GM12878 (cell line): ENCODE measurements at regions of chr1 and their contacts with region 1.

Region 1: GRCh38 chr1:206734499-206735142 is 36.0 kb upstream of the IL19 start:
- DNase-seq: no peak
- ATAC-seq: peak; percentile 45
- H3K4me3 ChIP-seq: no peak overlapping the region
- H3K27ac ChIP-seq: no peak overlapping the region; the same call in 1 of the 2 replicates
- H3K4me1 ChIP-seq: peaks cover 28% of the 10 kb centered on the region
- H3K27me3 ChIP-seq: no peaks in the 10 kb centered on the region
- CTCF ChIP-seq: peak; percentile 84 to 98 (median 96)
- EP300 ChIP-seq: no peak
- POLR2A ChIP-seq: no peak; the same call in 1 of the 2 replicates
- RAD21 ChIP-seq: peak; percentile 98

Region 2: DNA sequence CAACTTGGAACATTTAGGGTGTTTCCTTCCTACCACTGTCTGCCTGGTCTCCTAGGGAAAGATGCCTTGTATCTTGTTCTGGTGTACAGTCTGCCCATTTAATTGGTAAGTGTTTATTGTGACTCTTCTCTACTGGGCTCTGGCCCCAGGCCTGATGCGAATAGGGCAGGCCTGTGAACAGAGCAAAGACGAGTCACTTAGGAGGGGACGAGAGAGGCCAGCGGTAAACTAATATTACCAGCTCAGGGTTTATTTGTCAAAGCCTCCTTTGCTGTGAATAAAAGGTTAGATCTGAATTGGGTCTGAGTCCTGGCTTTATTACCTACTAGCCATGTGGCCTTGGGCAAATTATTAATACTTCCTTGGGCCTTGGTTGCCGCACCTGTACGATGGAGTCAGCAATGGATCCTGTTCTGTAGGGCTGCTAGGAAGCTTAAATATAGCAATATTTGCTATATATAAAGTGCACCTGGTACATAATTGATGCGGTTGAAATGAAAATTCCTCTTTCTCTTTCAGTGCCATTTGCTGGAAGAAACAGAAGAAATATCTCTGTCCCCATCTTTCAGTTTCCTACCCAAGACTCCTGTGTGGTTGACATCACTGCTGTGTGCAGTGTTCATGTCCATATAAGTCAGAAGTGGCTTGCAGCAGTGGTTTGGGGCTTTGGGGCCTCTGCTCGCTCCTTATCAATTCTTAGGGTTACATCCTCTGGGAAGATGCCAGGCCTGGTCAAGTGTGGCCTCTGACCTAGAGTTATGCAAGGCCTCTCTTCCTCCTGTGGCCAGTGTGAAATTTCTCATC is 17.5 kb before region 1 on chr1:
- CTCF ChIA-PET with region 1: interaction called, 72 read pairs
- POLR2A ChIA-PET with region 1: interaction called, 6 read pairs
- RAD21 ChIA-PET with region 1: interaction called, 11 read pairs
- SMC1A ChIA-PET with region 1: interaction called, 11 read pairs
- in situ Hi-C with region 1: no loop called
- intact Hi-C with region 1: no loop called
- DNase-seq: peak; percentile 88
- ATAC-seq: peak; percentile 78
- H3K4me3 ChIP-seq: 0 out of 2 replicates have a peak overlapping the region, but pooled peaks have one; percentile 19
- H3K27ac ChIP-seq: peak overlapping the region; percentile 73
- H3K4me1 ChIP-seq: peaks cover 74% of the 10 kb centered on the region
- H3K27me3 ChIP-seq: no peaks in the 10 kb centered on the region
- CTCF ChIP-seq: no peak
- EP300 ChIP-seq: peak in 1 of 2 experiments; percentile 34; a peak in 1 of 4 replicates
- POLR2A ChIP-seq: no peak
- RAD21 ChIP-seq: no peak

Region 3: DNA sequence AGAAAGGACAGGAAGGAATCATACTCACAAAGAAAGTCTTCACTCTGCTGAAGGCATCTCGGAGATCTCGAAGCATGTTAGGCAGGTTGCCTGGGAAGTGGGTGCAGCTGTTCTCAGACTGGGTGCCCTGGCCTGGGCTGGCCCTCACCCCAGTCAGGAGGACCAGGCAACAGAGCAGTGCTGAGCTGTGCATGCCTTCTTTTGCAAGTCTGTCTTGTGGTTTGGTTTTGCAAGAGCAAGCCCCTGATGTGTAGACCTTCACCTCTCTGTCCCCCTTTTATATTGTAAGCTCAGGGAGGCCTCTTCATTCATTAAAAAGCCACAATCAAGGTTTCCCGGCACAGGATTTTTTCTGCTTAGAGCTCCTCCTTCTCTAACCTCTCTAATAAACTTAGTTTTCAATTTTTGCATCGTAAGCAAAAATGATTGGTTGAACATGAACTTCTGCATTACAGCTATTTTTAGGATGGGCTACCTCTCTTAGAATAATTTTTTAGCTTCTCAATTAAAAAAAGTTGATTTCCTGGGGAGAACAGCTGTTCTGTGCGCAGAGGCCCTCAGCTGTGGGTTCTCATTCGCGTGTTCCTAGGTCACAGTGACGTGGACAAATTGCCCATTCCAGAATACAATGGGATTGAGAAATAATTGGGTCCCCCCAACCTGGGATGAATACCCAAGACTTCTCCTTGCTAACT is 37.8 kb after region 1 on chr1 and contains the start of gene IL10:
- CTCF ChIA-PET with region 1: interaction called, 110 read pairs
- POLR2A ChIA-PET with region 1: interaction called, 52 read pairs
- RAD21 ChIA-PET with region 1: interaction called, 227 read pairs
- SMC1A ChIA-PET with region 1: interaction called, 264 read pairs
- in situ Hi-C with region 1: loop called (anchors 5 kb)
- intact Hi-C with region 1: no loop called
- DNase-seq: no peak
- ATAC-seq: no peak
- H3K4me3 ChIP-seq: peak within 1 kb of the TSS; percentile 74
- H3K27ac ChIP-seq: peak within 1 kb of the TSS; percentile 86
- H3K4me1 ChIP-seq: peaks cover 70% of the 10 kb centered on the region
- H3K27me3 ChIP-seq: no peaks in the 10 kb centered on the region
- CTCF ChIP-seq: no peak
- EP300 ChIP-seq: no peak
- POLR2A ChIP-seq: peak; percentile 46; the same call in 1 of the 2 replicates
- RAD21 ChIP-seq: no peak
- polyA plus RNA-seq, gene IL10: 1.2 to 1.6 TPM

Region 4: GRCh38 chr1:206797534-206798383 is 63.1 kb after region 1 on chr1:
- CTCF ChIA-PET with region 1: interaction called, 805 read pairs
- POLR2A ChIA-PET with region 1: interaction called, 24 read pairs
- RAD21 ChIA-PET with region 1: interaction called, 297 read pairs
- SMC1A ChIA-PET with region 1: interaction called, 417 read pairs
- in situ Hi-C with region 1: loop called (anchors 5 kb)
- intact Hi-C with region 1: no loop called
- DNase-seq: no peak
- ATAC-seq: peak; percentile 31; the same call in 2 of the 3 replicates
- H3K4me3 ChIP-seq: no peak overlapping the region
- H3K27ac ChIP-seq: no peak overlapping the region
- H3K4me1 ChIP-seq: peaks cover 28% of the 10 kb centered on the region
- H3K27me3 ChIP-seq: no peaks in the 10 kb centered on the region
- CTCF ChIP-seq: peak; percentile 44 to 78 (median 73)
- EP300 ChIP-seq: no peak
- POLR2A ChIP-seq: no peak
- RAD21 ChIP-seq: peak; percentile 41

Region 5: DNA sequence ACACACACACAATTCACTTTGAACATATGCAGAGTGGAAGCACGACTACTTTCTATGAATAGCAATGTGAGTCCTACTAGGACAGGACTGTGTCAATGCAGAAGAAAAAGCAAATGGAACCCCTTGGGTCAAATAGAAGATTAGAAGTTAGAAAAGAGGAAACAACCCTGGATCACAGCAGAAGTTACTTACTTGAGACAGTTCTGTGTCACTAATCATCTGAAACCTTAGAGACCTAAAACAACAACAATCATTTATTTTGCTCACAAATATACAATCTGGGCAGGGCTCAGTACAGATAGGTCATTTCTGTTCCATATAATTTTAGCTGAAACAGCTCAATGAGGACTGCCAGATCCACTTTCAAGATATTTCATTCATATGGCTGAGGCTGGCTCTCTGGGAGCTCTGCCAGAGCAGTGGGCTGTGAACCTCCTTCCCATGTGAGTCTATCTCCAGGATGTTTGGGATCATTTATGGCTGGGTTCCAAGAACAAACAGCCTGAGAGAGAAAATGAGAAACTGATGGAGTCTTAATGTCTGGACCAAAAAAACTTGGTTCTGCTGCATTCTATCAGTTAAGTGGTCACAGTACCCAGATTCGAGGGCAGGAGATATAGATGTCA is 80.2 kb after region 1 on chr1:
- CTCF ChIA-PET with region 1: interaction called, 805 read pairs
- POLR2A ChIA-PET with region 1: interaction called, 7 read pairs
- RAD21 ChIA-PET with region 1: interaction called, 297 read pairs
- SMC1A ChIA-PET with region 1: interaction called, 417 read pairs
- in situ Hi-C with region 1: no loop called
- intact Hi-C with region 1: no loop called
- DNase-seq: no peak
- ATAC-seq: peak; percentile 42
- H3K4me3 ChIP-seq: no peak overlapping the region
- H3K27ac ChIP-seq: no peak overlapping the region; the same call in 1 of the 2 replicates
- H3K4me1 ChIP-seq: peaks cover 27% of the 10 kb centered on the region
- H3K27me3 ChIP-seq: no peaks in the 10 kb centered on the region
- CTCF ChIP-seq: no peak
- EP300 ChIP-seq: no peak
- POLR2A ChIP-seq: no peak
- RAD21 ChIP-seq: no peak

Region 6: GRCh38 chr1:206935491-206936067 is 201.0 kb after region 1 on chr1:
- CTCF ChIA-PET with region 1: interaction called, 25 read pairs
- POLR2A ChIA-PET with region 1: interaction called, 7 read pairs
- RAD21 ChIA-PET with region 1: interaction called, 22 read pairs
- SMC1A ChIA-PET with region 1: interaction called, 33 read pairs
- in situ Hi-C with region 1: no loop called
- intact Hi-C with region 1: no loop called
- DNase-seq: no peak
- ATAC-seq: peak; percentile 64
- H3K4me3 ChIP-seq: no peak overlapping the region
- H3K27ac ChIP-seq: no peak overlapping the region
- H3K4me1 ChIP-seq: peaks cover 27% of the 10 kb centered on the region
- H3K27me3 ChIP-seq: no peaks in the 10 kb centered on the region
- CTCF ChIP-seq: peak; percentile 44 to 71 (median 57)
- EP300 ChIP-seq: no peak
- POLR2A ChIP-seq: no peak
- RAD21 ChIP-seq: peak; percentile 36; the same call in 1 of the 2 replicates

Region 7: DNA sequence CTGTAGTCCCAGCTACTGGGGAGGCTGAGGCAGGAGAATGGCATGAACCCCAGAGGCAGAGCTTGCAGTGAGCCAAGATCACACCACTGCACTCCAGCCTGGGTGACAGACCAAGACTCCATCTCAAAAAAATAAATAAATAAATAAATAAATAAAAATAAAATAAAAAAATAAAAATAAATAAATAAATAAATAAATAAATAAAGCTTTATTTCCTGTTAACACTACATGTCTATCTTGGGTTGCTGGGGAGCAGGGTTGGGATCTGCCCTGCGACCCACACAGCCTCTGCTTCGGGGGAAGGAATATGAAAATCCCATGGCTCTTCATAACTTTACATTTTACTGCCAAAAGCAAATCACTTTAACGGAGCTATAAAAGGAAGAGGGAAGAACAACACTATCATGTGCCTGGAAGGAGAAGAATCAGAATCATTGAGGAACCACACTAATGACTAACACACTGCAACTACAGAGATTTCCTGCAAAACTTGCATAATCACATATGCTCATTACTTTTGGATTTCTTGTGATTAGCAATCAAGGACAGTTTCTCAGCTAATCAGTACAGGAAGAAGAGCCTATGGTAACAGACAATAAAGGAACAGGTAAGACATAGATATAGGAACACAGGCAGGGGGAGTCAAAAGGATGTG is 514.0 kb after region 1 on chr1:
- CTCF ChIA-PET with region 1: no interaction called
- POLR2A ChIA-PET with region 1: no interaction called
- RAD21 ChIA-PET with region 1: no interaction called
- SMC1A ChIA-PET with region 1: no interaction called
- in situ Hi-C with region 1: no loop called
- intact Hi-C with region 1: no loop called
- DNase-seq: no peak
- ATAC-seq: no peak
- H3K4me3 ChIP-seq: no peak overlapping the region
- H3K27ac ChIP-seq: no peak overlapping the region
- H3K4me1 ChIP-seq: no peaks in the 10 kb centered on the region
- H3K27me3 ChIP-seq: no peaks in the 10 kb centered on the region
- CTCF ChIP-seq: no peak
- EP300 ChIP-seq: no peak
- POLR2A ChIP-seq: no peak
- RAD21 ChIP-seq: no peak